ENCODE measurements at regions of chr14 and their contacts with region 1.

Region 1: GRCh38 chr14:57254884-57255283 is 13.8 kb downstream of the EXOC5 start:
- DNase-seq: no peak
- ATAC-seq: no peak
- H3K4me3 ChIP-seq: no peak overlapping the region
- H3K27ac ChIP-seq: no peak overlapping the region
- H3K4me1 ChIP-seq: peaks cover 0 to 2% of the 10 kb centered on the region in 2 donors
- H3K27me3 ChIP-seq: no peaks in the 10 kb centered on the region

Region 2: DNA sequence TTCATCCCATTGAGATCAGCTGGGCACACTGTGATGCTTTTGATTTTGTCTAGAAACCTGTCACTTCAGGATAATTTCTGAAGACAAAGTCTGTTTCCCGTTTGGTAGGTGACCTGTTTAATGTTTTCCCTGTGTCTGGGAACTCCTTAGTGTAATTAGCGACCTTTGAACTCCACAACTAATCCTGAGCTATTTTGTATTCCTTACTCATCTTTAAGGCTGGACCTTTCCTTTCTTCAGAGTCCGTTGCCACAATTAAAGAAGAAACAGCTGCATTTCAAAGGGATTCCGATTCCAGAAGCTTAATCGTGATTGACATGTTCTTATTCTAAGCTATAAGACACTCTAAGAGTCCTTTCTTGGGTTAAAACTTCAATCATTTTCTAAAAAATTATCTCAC is 35.9 kb after region 1 on chr14:
- intact Hi-C with region 1: loop called in 1 of 2 experiments (anchors 2 kb)
- DNase-seq: no peak
- ATAC-seq: no peak
- H3K4me3 ChIP-seq: no peak overlapping the region
- H3K27ac ChIP-seq: no peak overlapping the region
- H3K4me1 ChIP-seq: no peaks in the 10 kb centered on the region
- H3K27me3 ChIP-seq: no peaks in the 10 kb centered on the region